ENCODE measurements at regions of chr11 and their contacts with region 1.

Region 1: DNA sequence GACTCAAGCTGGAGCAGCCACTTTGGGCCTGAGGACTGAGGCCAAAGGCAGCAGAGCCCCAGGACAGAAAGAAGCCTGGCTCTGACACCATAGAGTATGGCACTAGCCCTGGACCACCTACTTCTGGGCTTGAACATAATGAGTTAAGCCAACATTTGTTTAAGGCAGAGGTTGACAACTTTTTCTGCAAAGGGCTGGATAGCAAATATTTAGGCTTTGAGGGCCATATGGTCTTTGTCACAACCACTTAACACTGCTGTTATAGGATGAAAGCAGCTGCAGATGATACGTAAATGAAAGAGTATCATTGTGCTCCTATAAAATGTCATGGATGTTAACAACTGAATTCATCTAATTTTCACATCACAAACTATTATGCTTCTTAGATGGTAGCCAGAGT is 16.6 kb downstream of the OSBP start:
- DNase-seq: no peak
- H3K4me3 ChIP-seq: no peak overlapping the region
- H3K27ac ChIP-seq: no peak overlapping the region
- H3K4me1 ChIP-seq: no peaks in the 10 kb centered on the region
- CTCF ChIP-seq: no peak

Region 2: GRCh38 chr11:59336176-59336575 is 262.8 kb before region 1 on chr11:
- CTCF ChIA-PET with region 1: no interaction called
- POLR2A ChIA-PET with region 1: no interaction called
- intact Hi-C with region 1: no loop called
- DNase-seq: no peak
- H3K4me3 ChIP-seq: no peak overlapping the region
- H3K27ac ChIP-seq: no peak overlapping the region
- H3K4me1 ChIP-seq: no peaks in the 10 kb centered on the region
- CTCF ChIP-seq: no peak

Region 3: DNA sequence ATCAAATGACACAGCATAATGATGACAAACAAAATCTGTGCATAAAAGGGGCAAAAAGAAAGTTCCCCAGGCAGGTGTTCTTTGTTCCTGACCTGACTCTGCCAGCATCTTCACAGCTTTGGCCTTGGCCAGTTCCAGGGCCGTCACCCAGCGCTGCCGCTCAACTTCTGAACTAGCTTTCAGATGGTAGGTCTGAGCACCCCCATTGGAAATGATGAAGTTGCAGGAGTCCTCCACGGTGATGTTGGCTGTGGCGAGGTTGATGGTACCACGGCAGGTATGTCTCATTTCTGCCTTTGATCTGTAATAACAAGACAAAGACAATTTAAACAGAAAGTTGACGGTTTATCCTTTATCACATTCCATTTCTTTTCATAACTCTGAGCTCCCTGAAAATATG is 11.3 kb after region 1 on chr11:
- CTCF ChIA-PET with region 1: no interaction called
- POLR2A ChIA-PET with region 1: interaction called, 11 read pairs
- intact Hi-C with region 1: no loop called
- DNase-seq: no peak
- H3K4me3 ChIP-seq: no peak overlapping the region
- H3K27ac ChIP-seq: no peak overlapping the region
- H3K4me1 ChIP-seq: peaks cover 29% of the 10 kb centered on the region
- CTCF ChIP-seq: no peak

Region 4: GRCh38 chr11:59654893-59655292 is 55.9 kb after region 1 on chr11:
- CTCF ChIA-PET with region 1: no interaction called
- POLR2A ChIA-PET with region 1: no interaction called
- intact Hi-C with region 1: loop called (anchors 5 kb)
- DNase-seq: no peak
- H3K4me3 ChIP-seq: no peak overlapping the region
- H3K27ac ChIP-seq: no peak overlapping the region
- H3K4me1 ChIP-seq: no peaks in the 10 kb centered on the region
- CTCF ChIP-seq: no peak

Measured in OCI-LY7 (cell line).